Activated naive CD4-positive, alpha-beta T cell treated with anti-CD3 and anti-CD28 coated beads for 36 hours (primary cell): ENCODE measurements at regions of chr1 and their contacts with region 1.

Region 1: DNA sequence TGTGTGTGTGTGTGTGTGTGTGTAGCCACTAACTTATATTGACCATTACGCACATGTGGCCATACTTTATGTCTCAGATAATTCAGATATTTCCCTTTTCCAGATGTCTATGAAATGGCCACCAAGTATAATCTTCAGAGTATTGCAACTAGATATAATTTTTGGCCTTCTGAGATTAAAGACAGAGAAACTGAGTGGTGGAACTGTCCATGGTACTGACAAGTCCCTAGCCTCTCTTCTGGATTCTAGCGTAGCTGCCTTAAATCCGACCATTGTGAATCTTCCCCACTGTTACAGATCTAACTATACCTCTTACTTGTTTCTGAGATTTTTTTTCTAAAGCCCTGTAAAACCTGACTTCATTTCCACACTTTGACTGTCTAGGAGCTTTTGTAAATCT is 100.0 kb upstream of the SERTAD4 start:
- DNase-seq: no peak
- H3K4me3 Mint-ChIP-seq: no peak overlapping the region
- H3K27ac Mint-ChIP-seq: no peak overlapping the region
- H3K4me1 Mint-ChIP-seq: no peaks in the 10 kb centered on the region
- H3K27me3 Mint-ChIP-seq: peaks cover 4% of the 10 kb centered on the region

Region 2: DNA sequence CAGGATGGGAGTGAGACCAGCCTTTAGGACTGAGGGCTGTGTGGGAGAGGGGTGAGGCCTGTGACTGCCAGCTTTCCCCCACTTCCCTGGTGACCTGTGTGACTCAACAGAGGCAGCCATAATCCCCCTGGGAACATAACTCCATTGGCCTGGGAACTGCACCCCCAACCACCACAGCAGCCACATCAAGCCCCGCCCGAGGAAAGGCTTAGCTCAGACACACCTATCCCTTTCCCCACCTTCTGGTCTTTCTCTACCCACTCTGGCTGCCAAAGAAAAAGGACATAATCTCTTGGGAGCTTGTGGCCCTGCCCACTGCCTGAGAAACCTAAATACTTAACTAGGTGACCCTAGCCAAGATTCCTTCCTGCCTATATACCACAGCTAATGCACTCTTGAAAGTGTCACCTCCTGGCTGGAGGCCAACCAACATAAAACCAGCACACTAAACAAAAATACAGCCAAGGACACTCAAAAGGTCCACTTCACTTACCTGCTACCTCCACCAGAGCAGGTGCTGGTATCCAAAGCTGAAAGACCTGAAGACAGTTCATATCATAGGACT is 955.6 kb before region 1 on chr1:
- CTCF ChIA-PET with region 1: no interaction called
- intact Hi-C with region 1: no loop called
- DNase-seq: no peak
- H3K4me3 Mint-ChIP-seq: no peak overlapping the region
- H3K27ac Mint-ChIP-seq: no peak overlapping the region
- H3K4me1 Mint-ChIP-seq: no peaks in the 10 kb centered on the region
- H3K27me3 Mint-ChIP-seq: peaks cover 3% of the 10 kb centered on the region

Region 3: DNA sequence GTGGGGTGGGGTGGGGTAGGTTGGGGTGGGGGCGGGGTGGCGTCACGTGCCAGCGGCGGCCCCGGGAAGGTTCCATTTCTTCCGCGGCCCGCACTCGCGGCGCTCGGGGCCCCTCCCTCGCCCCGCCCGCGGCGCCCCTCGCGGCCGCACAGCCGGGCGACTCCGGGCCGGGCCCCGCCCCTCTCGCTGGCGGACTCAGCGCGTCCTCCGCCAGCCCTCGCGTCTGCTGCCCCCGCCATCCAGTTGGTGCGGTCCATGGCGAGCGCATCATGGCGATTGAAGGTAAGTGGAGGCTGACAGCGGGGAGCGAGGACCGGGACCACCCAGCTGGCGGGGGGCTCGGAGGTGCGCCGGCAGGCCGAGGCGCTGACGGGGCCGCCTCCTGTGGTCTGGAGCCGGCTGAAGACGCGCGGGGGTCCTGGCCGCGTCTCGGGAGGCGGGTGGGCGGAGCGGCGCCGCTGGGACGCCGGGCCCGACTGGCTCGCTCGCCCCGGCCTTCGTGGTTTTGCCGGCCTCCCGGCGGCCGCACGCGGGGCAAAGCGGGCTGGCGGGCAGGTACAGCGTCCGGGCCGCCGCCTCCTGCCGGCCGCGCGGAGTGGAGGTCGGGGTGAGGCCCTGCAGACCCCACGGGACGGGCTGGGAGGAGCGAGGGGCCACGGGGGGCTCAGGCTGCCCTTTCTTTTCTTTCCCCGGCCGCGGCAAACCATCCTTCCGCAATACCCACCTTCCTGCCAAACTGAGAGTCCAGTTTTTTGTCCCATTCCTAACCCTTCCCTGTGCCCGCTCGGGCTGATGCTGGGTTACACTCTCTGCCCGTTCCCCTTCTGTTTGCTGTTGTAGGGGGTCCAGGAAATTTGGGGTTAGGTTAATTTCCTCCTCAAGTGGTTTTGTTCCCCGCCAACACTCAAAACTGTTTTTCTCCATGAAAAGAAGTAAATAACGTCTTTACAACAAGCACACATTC is 194.3 kb before region 1 on chr1 and contains the start of gene SYT14:
- CTCF ChIA-PET with region 1: no interaction called
- intact Hi-C with region 1: loop called (anchors 5 kb)
- DNase-seq: no peak
- H3K4me3 Mint-ChIP-seq: peak within 1 kb of the TSS; percentile 45
- H3K27ac Mint-ChIP-seq: no peak within 1 kb of the TSS
- H3K4me1 Mint-ChIP-seq: peaks cover 9% of the 10 kb centered on the region
- H3K27me3 Mint-ChIP-seq: peaks cover 46% of the 10 kb centered on the region
- total RNA-seq, gene SYT14: not detected

Region 4: GRCh38 chr1:210200124-210200736 is 67.6 kb after region 1 on chr1:
- CTCF ChIA-PET with region 1: no interaction called
- intact Hi-C with region 1: no loop called
- DNase-seq: no peak
- H3K4me3 Mint-ChIP-seq: no peak overlapping the region
- H3K27ac Mint-ChIP-seq: no peak overlapping the region
- H3K4me1 Mint-ChIP-seq: no peaks in the 10 kb centered on the region
- H3K27me3 Mint-ChIP-seq: no peaks in the 10 kb centered on the region